Dorsolateral prefrontal cortex (tissue), 120 donors: ENCODE measurements at regions of chr11 and their contacts with region 1.

Region 1: DNA sequence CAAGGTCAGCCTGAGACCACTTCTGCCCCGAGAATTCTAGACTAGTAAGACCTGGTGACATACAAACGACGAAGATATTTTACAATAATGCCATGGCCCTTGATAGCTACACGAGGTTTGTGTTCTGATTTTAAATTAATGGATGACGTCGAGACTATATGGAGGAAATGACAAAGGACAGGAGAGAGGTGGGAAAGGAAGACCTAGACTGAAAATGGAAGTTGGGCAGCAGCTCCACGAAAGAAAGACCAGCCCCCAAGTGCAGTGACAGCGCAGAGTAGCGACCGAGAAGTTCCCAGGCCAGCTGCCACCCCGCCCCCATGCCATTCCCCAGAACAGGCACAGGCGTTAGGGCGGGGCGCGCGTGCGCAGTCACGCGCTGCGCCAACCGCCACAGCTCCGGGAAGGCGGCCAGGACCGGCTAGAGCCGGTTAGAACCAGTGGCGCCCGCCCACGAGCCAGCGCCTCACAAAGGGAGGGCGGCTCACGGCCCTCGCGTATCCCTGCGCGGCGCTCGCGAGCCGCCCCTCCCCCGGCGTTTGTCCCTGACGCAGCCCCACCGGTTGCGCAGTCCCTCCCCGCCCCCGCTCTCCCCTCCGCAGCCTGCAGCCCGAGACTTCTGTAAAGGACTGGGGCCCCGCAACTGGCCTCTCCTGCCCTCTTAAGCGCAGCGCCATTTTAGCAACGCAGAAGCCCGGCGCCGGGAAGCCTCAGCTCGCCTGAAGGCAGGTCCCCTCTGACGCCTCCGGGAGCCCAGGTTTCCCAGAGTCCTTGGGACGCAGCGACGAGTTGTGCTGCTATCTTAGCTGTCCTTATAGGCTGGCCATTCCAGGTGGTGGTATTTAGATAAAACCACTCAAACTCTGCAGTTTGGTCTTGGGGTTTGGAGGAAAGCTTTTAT is 1.5 kb upstream of the MALAT1 start:
- DNase-seq: peak; percentile 94 to 99 (median 98)
- H3K4me3 ChIP-seq: peak overlapping the region; percentile 68 to 100 (median 92)
- H3K27ac ChIP-seq: peak overlapping the region; percentile 98 to 100 (median 100)
- H3K27me3 ChIP-seq: no peaks in the 10 kb centered on the region
- CTCF ChIP-seq: peak in 39 of 56 donors; percentile 11 to 54 (median 39)

Region 2: DNA sequence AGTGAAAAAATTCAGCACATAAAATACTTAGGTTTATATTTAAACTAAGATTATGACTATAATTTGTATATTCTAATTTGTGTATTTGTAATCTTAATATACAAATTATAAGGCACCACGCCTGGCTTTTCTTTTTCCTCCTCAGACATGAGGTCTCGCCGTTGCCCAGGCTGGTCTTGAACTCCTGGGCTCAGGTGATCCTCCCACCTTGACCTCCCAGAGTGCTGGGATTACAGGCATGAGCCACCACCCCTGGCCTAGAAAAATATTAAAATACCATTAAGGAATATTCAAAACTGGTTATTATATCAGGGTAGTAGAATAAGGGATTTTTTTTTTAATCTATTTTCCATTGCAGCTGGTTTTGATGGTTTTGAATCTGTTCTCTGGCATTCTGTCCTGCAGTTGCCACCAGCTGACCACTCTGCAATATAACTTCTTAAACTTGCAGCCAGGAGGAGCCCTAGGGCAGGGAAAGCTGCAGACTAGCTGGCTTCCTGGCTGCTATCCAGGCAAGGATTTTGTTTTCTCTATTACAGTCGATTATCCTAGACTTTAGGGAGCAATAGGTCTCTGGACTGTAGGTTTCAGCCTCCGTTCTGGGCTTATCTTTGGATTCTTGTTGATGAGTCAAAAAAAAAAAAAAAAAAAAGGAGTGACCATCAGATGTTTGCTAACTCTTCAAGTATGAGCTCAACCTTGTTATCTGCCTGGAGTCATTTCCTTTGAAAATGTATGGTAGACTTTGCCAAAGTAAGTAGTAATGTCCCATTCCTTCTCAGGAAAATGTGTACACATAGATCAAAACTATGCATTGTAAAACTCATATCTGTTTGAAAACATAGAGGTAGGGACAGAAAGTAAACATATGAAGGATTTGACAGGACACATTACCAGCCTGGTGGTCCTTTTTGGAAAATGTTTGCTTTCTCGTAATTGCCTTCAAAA is 222.4 kb before region 1 on chr11:
- intact Hi-C with region 1: no loop called
- DNase-seq: peak in 8 of 10 donors; percentile 61 to 85 (median 74)
- H3K4me3 ChIP-seq: peak overlapping the region in 19 of 59 donors; percentile 8 to 38 (median 21)
- H3K27ac ChIP-seq: peak overlapping the region in 52 of 59 donors; percentile 5 to 87 (median 63)
- H3K27me3 ChIP-seq: no peaks in the 10 kb centered on the region
- CTCF ChIP-seq: peak; percentile 70 to 97 (median 90)

Region 3: GRCh38 chr11:65403607-65404121 is 93.7 kb before region 1 on chr11:
- intact Hi-C with region 1: no loop called
- DNase-seq: no peak
- H3K4me3 ChIP-seq: no peak overlapping the region
- H3K27ac ChIP-seq: peak overlapping the region in 15 of 59 donors; percentile 6 to 73 (median 31)
- H3K27me3 ChIP-seq: no peaks in the 10 kb centered on the region
- CTCF ChIP-seq: no peak

Region 4: DNA sequence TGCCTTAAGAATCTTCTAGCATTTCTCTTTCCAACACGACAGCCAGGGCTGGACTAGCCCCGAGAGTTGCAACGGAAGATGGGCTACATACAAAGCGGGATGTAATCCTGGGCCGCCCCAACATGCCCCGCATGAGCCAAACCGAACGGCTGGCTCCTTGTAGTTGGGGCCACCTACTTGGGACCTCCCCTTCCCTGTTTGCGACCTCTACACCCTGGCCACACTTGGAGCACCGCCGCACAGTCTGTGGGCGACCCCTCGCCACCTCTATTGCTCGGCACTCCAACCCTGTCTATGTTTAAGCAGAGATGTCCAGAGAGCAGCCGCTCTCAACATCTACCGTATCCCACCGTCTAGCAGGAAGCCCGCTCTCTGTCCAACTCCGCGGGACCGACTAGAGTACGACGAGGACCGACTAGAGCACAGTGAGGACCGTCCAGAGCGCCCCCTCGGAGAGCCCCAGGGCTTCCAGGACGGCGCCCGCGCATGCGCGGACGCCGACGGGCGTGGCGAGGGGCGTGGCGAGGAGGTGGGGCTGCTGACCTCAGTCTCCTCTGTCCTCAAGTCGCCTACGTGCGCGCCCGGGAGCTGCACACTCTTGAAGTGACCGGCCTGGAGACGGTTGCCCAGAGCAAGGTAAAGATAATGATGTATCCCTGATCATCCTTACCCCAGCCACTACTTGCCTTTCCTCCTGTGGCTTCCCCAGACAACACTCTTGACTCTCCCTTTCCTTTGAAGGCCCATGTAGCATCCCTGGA is 42.5 kb before region 1 on chr11:
- intact Hi-C with region 1: loop called in 1 of 2 experiments (anchors 1 kb)
- DNase-seq: peak; percentile 75 to 91 (median 86)
- H3K4me3 ChIP-seq: peak overlapping the region; percentile 34 to 73 (median 58)
- H3K27ac ChIP-seq: peak overlapping the region; percentile 33 to 95 (median 85)
- H3K27me3 ChIP-seq: no peaks in the 10 kb centered on the region
- CTCF ChIP-seq: peak in 49 of 56 donors; percentile 9 to 63 (median 36)

Region 5: DNA sequence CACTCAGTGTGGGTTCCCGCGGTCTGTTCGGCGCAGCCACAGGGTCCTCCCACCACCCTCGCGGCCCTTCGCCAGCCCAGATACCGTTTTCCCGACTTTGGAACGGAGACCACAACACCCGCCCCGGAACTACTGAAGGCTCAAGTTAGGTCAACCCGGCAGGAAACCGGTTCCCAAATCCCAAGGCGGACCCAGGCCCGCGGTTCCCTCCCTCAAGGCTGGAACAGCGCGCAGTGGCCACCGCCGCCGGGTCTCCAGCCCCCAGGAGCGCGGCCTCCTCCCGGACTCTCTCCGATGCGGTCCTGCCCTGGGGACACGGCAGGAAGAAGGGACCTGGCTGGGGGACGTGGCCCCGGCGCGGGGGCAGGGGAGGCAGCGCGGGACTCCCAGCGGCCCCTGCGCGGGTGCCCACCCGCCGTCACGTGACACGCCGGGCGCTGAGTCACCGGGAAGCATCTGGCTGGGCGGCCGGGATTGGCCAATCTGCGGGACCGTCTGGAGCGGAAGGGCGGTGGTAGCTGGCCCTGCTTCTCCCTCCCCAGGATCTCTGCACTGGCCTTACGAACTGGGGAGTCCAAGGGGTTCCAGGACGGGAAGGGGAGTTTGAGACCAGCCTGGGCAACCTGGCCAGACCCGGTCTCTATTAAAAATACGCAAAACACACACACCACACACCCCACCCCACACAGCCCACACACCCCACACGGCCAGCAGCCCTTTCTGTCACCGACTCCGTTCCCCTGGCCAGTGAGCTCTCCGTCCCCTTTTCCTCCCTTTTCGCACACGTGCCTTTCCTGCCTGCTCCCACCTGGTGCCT is 20.0 kb before region 1 on chr11:
- intact Hi-C with region 1: loop called (anchors 1 kb)
- DNase-seq: peak; percentile 93 to 97 (median 96)
- H3K4me3 ChIP-seq: peak overlapping the region; percentile 64 to 100 (median 86)
- H3K27ac ChIP-seq: peak overlapping the region; percentile 91 to 100 (median 100)
- H3K27me3 ChIP-seq: no peaks in the 10 kb centered on the region
- CTCF ChIP-seq: peak in 15 of 56 donors; percentile 7 to 43 (median 19)

Region 6: DNA sequence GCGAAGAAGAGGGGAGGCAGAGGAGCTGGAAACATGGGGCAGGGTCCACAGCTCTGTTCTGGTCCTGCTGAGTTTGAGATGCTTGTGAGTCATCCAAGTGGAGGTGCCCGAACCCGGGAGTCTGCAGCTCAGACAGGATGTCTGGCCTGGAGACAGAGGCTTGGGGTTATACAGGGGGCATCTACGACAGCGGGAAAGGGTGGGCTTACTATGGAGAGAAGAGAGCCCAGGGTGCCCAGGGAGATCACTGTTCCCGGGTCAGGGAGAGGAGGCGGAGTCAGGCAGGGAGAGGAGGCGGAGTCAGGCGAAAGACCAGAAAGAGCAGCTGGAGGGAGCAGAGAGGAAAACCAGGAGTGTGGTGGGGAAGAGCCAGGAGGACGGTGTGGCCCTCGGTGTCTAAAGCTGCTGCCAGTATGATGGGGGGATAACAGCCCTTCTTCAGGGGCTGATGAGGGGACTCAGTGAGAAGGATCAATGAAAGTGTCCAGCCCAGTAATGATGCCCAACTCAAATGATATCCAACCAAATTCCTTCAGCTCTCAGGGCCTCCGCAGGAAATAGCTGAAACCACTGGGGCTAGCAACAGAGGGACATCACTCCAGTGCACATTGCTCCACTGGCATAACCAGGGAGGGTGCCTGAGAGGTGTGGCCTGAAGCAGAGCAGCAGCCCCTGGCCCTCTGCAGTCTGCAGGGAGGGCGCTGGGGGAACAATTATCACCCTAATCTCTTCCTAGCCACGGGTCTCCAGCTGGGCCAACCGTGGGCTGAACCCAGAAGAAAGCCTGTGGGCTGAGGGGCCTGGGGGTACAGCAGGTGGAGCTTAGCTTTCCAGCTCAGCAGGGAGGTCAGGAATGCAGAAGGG is 63.4 kb after region 1 on chr11:
- intact Hi-C with region 1: no loop called
- DNase-seq: peak in 3 of 10 donors; percentile 47 to 72 (median 65)
- H3K4me3 ChIP-seq: peak overlapping the region in 2 of 59 donors; percentile 2 to 5
- H3K27ac ChIP-seq: peak overlapping the region in 58 of 59 donors; percentile 15 to 100 (median 98)
- H3K27me3 ChIP-seq: no peaks in the 10 kb centered on the region
- CTCF ChIP-seq: no peak